SK-N-SH (cell line): ENCODE measurements at regions of chr3 and their contacts with region 1.

Region 1: GRCh38 chr3:52204337-52205073 is 6.5 kb downstream of the ALAS1 start:
- DNase-seq: no peak
- H3K4me3 ChIP-seq: no peak overlapping the region
- H3K27ac ChIP-seq: no peak overlapping the region
- H3K4me1 ChIP-seq: no peaks in the 10 kb centered on the region
- H3K27me3 ChIP-seq: no peaks in the 10 kb centered on the region
- CTCF ChIP-seq: no peak
- EP300 ChIP-seq: no peak
- RAD21 ChIP-seq: no peak

Region 2: DNA sequence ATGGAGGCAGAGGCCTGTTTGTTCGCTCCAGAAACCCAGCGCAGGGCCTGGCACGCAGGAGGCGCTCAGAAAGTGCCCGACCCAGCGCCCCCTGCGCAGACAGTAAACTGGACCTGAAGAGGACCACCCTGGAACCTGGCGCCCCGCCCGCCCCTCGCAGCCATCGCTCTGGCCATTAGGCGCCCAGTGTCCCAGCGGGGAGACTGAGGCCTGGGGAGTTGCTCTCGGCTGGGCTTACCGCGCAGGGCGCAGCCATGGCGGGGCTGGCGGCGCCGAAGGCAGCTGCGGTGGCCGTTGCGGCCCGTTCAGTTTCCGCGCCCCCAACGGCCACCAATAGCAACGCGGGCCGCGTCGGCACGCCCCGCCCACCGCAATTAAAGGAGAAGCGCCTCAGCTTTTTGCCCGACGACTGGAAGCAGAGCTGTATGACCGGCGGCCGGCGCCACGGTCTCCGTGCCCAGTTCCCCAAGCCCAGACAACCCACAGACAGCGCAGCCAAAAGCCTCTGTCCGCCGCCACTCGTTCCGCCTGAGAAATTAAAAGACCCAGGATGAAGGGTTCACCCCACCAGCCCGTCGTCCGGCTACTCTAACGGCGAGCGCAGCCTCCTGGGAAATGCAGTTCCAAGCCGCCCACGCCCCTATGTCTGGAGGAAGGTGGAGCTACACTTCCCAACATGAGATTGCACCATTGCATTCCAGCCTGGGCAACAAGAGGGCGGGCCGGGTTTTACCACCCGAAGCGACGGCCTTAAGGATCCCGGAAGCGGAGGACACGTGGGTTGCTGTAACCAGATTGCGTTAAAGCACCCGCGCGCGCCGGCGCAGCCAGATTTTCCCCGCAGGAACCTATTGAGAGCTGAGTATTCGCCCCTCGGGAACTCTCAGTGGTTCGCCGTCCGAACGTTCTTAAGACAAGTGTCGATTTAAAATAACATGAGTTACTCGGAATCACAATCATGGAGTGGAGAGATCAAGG is 50.1 kb before region 1 on chr3 and contains the start of gene POC1A:
- CTCF ChIA-PET with region 1: interaction called, 3 read pairs
- POLR2A ChIA-PET with region 1: interaction called, 10 read pairs
- DNase-seq: peak; percentile 93
- H3K4me3 ChIP-seq: peak within 1 kb of the TSS; percentile 76 to 84
- H3K27ac ChIP-seq: peak within 1 kb of the TSS; percentile 81 to 95
- H3K4me1 ChIP-seq: peaks cover 5 to 14% of the 10 kb centered on the region in 2 experiments; a peak in 3 of 4 replicates
- H3K27me3 ChIP-seq: no peaks in the 10 kb centered on the region
- CTCF ChIP-seq: no peak
- EP300 ChIP-seq: no peak
- RAD21 ChIP-seq: no peak
- polyA plus RNA-seq, gene POC1A: 9.6 and 11.7 TPM in 2 replicates

Region 3: GRCh38 chr3:52245322-52246263 is 41.1 kb after region 1 on chr3 and contains the start of gene PPM1M:
- CTCF ChIA-PET with region 1: no interaction called
- POLR2A ChIA-PET with region 1: no interaction called
- DNase-seq: peak; percentile 90
- H3K4me3 ChIP-seq: peak within 1 kb of the TSS; percentile 57 to 60
- H3K27ac ChIP-seq: peak within 1 kb of the TSS; percentile 30 to 73; a peak in 3 of 4 replicates
- H3K4me1 ChIP-seq: peaks cover 4 to 43% of the 10 kb centered on the region in 2 experiments; a peak in 3 of 4 replicates
- H3K27me3 ChIP-seq: no peaks in the 10 kb centered on the region
- CTCF ChIP-seq: no peak
- EP300 ChIP-seq: no peak
- RAD21 ChIP-seq: no peak
- polyA plus RNA-seq, gene PPM1M: 19.2 and 23.9 TPM in 2 replicates